HEK293 (cell line): ENCODE measurements at regions of chr6 and their contacts with region 1.

Region 1: DNA sequence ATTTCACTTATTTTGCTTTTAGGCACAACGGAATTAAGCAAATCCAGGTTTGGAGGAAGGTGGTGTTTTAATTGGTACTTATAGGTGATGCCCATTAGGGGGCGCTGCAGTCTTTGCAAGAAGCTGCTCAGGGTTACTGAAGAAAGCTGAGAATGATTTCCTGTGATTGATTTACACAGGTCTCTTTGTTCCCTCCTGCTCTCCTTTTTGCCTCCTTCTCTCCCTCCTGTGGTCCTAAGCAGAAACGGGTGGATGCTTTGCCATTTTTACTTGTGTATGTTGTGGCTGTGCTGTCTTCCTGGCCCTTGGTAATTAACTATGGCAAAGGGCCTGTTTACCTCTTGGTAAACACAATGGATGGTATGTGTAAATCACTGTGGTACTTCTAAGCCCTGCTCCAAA is 97.8 kb downstream of the ANKS1A start:
- H3K4me3 ChIP-seq: no peak overlapping the region
- H3K27ac ChIP-seq: no peak overlapping the region
- H3K4me1 ChIP-seq: no peaks in the 10 kb centered on the region
- CTCF ChIP-seq: peak; percentile 70

Region 2: GRCh38 chr6:34953061-34954025 is 33.5 kb before region 1 on chr6:
- CTCF ChIA-PET with region 1: interaction called, 14 read pairs
- POLR2A ChIA-PET with region 1: no interaction called
- H3K4me3 ChIP-seq: no peak overlapping the region
- H3K27ac ChIP-seq: no peak overlapping the region
- H3K4me1 ChIP-seq: peaks cover 31% of the 10 kb centered on the region
- CTCF ChIP-seq: no peak

Region 3: DNA sequence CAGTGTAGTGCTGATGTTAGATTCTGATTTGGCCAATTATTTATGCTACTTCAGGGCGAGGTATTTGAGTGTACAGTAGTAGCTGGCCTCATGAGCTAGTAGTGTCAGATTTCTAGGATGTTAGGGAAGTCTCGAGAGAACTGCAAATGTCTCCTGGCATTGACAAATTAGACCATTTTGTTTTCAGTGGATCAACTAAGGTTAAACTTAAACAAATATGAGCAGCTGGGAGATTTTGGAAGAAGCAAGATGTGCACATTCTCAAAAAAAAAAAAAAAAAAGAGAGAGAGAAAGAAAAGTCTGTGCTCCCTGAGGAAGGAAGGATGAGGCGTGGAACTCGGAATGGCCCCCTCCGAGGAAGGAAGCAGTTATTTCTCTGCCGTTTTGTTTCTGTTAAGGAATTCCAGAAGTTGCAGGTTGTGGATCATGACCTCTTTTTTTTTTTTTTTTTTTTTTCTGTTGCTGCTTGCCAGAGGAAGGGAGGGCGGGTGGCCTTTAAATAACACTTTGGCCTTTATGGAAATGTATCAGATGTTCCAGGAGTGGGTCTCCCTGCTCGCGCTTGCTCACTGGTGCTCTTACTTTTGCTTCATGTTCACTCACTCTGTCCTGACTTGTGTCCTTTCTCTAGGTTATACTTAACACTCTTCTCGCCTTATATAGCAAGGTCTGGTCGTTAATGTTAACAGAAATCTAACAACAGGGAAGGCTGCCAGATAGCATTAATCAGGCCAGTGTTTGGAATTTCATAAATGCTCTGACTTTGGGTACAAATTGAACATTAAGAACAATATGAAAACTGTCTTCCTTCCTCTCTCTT is 29.9 kb after region 1 on chr6:
- CTCF ChIA-PET with region 1: interaction called, 16 read pairs
- POLR2A ChIA-PET with region 1: no interaction called
- H3K4me3 ChIP-seq: no peak overlapping the region
- H3K27ac ChIP-seq: peak overlapping the region; percentile 49
- H3K4me1 ChIP-seq: peaks cover 14% of the 10 kb centered on the region
- CTCF ChIP-seq: no peak

Region 4: DNA sequence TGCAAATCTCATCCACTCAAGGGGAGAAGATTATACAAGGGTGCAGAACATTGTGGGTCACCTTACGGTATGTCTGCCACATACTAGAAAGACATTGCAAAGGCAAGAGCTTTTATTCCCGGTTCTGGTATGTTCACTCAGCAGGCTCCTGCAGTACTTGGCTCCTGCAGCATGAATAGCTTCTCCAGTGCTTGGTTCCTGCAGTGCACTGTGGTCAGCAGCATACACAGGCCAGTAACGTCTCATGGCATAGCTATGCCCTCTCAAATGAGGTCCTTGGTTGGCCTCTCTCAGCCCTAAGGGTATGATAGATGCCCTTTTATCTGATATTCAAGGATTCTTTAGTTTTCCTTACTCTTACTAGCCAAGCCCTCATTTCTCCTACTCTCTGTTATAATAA is 141.7 kb after region 1 on chr6:
- CTCF ChIA-PET with region 1: interaction called, 32 read pairs
- POLR2A ChIA-PET with region 1: no interaction called
- H3K4me3 ChIP-seq: no peak overlapping the region
- H3K27ac ChIP-seq: no peak overlapping the region
- H3K4me1 ChIP-seq: no peaks in the 10 kb centered on the region
- CTCF ChIP-seq: no peak

Region 5: GRCh38 chr6:35202066-35202546 is 215.3 kb after region 1 on chr6:
- CTCF ChIA-PET with region 1: interaction called, 68 read pairs
- POLR2A ChIA-PET with region 1: interaction called, 3 read pairs
- H3K4me3 ChIP-seq: no peak overlapping the region
- H3K27ac ChIP-seq: no peak overlapping the region
- H3K4me1 ChIP-seq: 0 out of 2 replicates have a peak, but pooled peaks cover 2% of the 10 kb centered on the region
- CTCF ChIP-seq: peak; percentile 81